AG04449 (cell line): ENCODE measurements at regions of chr17 and their contacts with region 1.

Region 1: DNA sequence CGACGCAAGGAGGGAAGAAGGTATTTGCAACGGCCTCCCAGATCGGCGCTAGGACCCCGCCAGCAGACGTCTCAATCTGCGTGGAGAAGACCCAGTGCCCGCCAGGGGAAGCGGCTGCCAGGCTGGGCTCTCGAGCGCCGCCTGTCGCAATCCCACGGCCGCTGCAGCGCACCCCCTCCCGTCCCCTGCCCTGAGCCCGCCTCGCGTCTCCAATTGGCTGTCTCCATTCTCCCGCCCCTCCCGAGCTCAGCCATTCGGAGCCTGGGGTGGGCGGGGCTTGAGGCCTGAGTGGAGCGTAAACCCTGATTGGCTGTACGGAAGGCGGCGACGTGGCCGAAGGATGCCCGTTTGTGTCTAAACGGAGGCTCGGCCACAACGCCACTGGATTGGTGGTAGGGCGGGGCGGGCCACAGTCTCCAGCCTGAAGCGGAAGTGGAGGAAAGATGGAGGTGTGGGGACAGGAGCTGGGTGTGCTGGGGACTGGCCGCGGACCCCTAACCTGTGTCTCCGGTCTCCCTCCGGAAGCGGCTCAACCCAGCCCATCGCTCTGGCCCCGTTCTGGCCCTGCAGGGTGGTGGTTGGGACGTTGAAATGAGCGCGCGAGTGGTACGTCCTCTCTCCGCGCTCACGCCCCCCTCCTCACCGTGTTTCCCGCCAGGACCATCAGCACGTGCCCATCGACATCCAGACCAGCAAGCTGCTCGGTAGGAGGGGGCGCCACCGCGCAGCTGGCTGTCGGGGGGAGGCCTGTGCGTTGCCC is at the start of gene CDK5RAP3:
- DNase-seq: peak; percentile 89
- H3K4me3 ChIP-seq: peak within 1 kb of the TSS; percentile 98
- CTCF ChIP-seq: peak; percentile 100

Region 2: GRCh38 chr17:47831003-47831933 is 139.6 kb before region 1 on chr17 and contains the starts of genes LRRC46 and MRPL10:
- CTCF ChIA-PET with region 1: no interaction called
- POLR2A ChIA-PET with region 1: no interaction called
- DNase-seq: peak; percentile 45
- H3K4me3 ChIP-seq: peak within 1 kb of the TSS; percentile 64
- CTCF ChIP-seq: peak; percentile 43

Region 3: GRCh38 chr17:47941236-47941994 is 29.5 kb before region 1 on chr17 and contains the start of gene PNPO:
- CTCF ChIA-PET with region 1: interaction called, 775 read pairs
- POLR2A ChIA-PET with region 1: no interaction called
- DNase-seq: peak; percentile 86
- H3K4me3 ChIP-seq: peak within 1 kb of the TSS; percentile 78
- CTCF ChIP-seq: peak; percentile 10

Region 4: GRCh38 chr17:47987240-47987835 is 16.5 kb after region 1 on chr17:
- CTCF ChIA-PET with region 1: interaction called, 42 read pairs
- POLR2A ChIA-PET with region 1: no interaction called
- DNase-seq: no peak
- H3K4me3 ChIP-seq: no peak overlapping the region
- CTCF ChIP-seq: no peak

Region 5: GRCh38 chr17:48002266-48002915 is 31.5 kb after region 1 on chr17:
- CTCF ChIA-PET with region 1: interaction called, 38 read pairs
- POLR2A ChIA-PET with region 1: no interaction called
- DNase-seq: no peak
- H3K4me3 ChIP-seq: no peak overlapping the region
- CTCF ChIP-seq: no peak

Region 6: GRCh38 chr17:48084932-48085444 is 114.1 kb after region 1 on chr17:
- CTCF ChIA-PET with region 1: no interaction called
- POLR2A ChIA-PET with region 1: no interaction called
- DNase-seq: no peak
- H3K4me3 ChIP-seq: no peak overlapping the region
- CTCF ChIP-seq: no peak

Region 7: DNA sequence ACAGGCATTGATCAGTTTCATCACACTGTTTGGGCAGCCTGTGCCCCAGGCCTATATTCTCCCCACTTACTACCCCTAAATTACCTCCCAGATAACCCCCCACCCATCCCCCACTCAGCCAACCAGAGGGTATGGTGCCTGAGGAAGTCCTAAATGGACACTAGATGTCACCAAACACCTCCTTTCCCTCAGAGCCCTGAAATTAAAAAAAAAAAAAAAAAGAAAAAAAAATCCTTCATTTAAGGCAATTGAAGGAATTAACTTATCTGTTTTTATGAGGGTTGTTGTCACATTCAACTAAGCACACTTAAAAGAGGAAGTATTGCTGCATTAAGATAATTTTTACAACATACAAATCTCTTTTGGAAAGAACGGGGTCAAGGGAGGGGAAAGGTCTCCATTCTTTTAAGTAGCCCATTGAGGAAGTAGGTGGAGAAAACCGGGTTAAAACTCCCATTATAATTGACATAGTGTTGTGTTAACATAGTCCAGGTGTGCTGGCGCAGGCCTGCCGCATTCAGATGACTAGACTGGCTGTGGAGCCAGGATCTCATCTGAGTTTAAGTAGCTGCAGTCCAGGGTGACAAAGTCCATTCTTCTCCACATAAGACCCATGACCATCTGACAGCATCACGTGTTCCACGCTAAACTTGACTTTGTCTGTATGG is 182.9 kb after region 1 on chr17:
- CTCF ChIA-PET with region 1: no interaction called
- POLR2A ChIA-PET with region 1: no interaction called
- DNase-seq: no peak
- H3K4me3 ChIP-seq: no peak overlapping the region
- CTCF ChIP-seq: peak; percentile 44